Naive thymus-derived CD4-positive, alpha-beta T cell (primary cell): ENCODE measurements at regions of chr20 and their contacts with region 1.

Region 1: DNA sequence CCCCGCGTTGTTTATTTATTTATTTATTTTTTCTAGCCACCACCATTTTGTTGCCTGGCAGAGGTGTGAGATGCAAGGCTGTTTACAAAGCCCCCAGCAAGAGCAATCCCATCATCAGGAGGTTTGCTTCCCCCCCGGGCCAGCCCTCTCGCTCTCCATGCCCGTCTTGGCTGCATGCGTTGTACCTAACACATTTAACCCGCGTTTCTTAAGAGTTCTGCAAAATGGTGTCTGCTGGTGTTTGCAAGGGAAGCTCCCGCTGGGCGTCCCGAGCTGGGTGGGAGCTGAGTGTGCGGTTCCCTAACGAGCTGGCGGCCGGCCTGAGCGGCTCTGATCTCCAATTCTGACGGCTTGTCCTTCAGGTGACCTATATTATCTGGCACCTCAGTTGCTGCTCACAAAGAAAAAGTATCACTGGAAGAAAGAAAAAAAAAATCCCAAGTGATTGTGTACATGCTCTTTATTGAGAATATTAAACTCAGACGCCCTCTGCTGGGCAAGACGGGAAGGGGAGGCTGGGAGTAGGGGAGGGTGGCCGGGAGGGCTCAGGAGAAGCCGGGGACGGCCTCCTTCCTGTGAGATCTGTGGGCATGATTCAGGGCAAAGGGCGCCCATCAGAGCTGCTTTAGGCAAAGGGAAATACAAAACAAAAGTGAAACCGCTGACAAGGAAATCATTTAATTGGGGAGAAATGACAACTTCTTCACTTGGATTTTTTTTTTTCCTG is 154.8 kb downstream of the BCAS1 start:
- DNase-seq: peak; percentile 70 to 90 (median 88)
- ATAC-seq: peak; percentile 99
- H3K4me3 ChIP-seq: peak overlapping the region; percentile 79
- H3K4me3 Mint-ChIP-seq: peak overlapping the region; percentile 88 to 97 (median 94)
- H3K27ac ChIP-seq: peak overlapping the region; percentile 70
- H3K27ac Mint-ChIP-seq: peak overlapping the region; percentile 82 to 95 (median 90)
- H3K4me1 ChIP-seq: peaks cover 5 to 7% of the 10 kb centered on the region in 2 donors
- H3K4me1 Mint-ChIP-seq: peaks cover 15 to 37% (median 23%) of the 10 kb centered on the region in 7 donors
- H3K27me3 ChIP-seq: no peaks in the 10 kb centered on the region
- H3K27me3 Mint-ChIP-seq: no peaks in the 10 kb centered on the region

Region 2: DNA sequence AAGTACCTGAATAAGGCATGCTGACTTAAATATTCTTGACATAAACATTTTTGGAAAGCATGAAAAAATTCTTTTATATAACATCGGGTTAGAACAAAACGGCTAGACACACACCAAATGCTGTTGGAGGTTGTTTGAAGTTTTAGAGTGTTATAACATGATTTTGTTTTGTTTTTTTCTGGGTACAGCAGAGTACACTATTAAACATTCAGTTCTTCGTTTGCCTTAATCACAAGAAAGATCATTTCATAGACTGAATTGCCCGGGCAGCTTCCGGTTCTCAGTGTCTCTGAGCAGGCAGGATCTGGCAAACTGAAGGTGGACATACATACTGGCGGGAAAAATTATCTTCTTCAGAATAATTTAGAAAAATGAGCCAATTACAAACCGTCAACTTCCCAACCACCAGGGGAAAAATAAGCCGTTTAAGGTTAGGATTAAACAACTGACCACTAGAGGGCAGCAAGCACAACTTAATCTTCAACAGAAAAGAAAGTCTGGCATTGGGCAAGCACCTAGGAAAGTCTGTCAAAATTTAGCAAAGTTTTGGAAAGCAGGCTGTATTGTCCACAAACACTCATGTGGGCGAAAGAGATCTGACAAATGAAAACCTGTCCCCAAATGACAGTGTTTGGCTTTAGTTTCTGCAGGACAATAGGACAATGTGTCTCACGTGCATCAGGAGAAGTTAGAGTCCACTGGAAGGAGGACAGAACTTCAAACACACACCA is 337.0 kb before region 1 on chr20:
- CTCF ChIA-PET with region 1: interaction called, 54 read pairs
- POLR2A ChIA-PET with region 1: interaction called, 23 read pairs
- intact Hi-C with region 1: loop called (anchors 1 kb)
- DNase-seq: peak in 8 of 9 donors; percentile 44 to 85 (median 80)
- ATAC-seq: peak; percentile 85
- H3K4me3 ChIP-seq: peak overlapping the region; percentile 49
- H3K4me3 Mint-ChIP-seq: peak overlapping the region; percentile 79 to 98 (median 86)
- H3K27ac ChIP-seq: peak overlapping the region; percentile 70
- H3K27ac Mint-ChIP-seq: peak overlapping the region; percentile 83 to 98 (median 94)
- H3K4me1 ChIP-seq: peaks cover 53 to 60% of the 10 kb centered on the region in 2 donors
- H3K4me1 Mint-ChIP-seq: peaks cover 41 to 99% (median 91%) of the 10 kb centered on the region in 7 donors
- H3K27me3 ChIP-seq: no peaks in the 10 kb centered on the region
- H3K27me3 Mint-ChIP-seq: no peaks in the 10 kb centered on the region

Region 3: DNA sequence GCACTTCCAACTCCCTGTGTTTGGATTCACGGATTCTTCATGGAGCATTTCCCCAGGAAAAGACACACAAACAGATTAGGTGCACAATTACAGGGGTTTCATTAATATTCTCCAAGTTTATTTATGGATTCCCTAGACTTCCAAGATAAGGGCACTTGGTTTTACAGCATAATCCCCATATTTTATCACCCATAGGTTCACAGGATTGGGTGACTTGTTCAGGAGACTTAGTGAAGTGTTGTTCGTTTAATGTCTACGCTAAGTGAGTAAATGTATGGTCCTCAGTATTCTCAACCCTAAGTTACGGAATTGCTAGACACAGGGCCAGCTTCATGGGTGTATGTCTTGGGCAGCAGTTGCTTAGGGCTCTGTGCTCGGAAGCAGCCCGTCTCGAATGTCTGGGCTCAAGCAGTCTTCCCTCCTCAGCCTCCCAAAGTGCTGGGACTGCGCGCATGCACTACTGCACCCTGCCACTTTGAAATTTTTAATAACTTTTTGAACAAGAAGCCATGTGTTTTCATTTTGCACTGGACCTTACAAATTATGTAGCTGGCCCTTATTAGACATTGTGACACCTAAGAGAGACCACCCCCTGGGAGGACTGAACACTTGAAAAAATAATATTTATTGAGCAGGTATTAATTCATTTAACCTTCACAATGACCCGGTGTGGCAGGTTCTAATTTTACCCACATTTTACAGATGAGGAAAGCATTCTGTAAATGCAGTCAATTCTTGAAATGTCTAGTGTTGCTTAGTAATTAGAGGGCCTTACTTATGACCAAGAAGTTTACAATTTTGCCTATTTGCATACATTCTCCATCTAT is 230.4 kb before region 1 on chr20:
- CTCF ChIA-PET with region 1: interaction called, 5 read pairs
- POLR2A ChIA-PET with region 1: no interaction called
- intact Hi-C with region 1: loop called in 1 of 2 experiments (anchors 5 kb)
- DNase-seq: no peak
- ATAC-seq: no peak
- H3K4me3 ChIP-seq: no peak overlapping the region
- H3K4me3 Mint-ChIP-seq: peak overlapping the region in 2 of 10 donors; percentile 2 to 33
- H3K27ac ChIP-seq: no peak overlapping the region
- H3K27ac Mint-ChIP-seq: peak overlapping the region in 7 of 9 donors; percentile 19 to 83 (median 74)
- H3K4me1 ChIP-seq: peaks cover 0 to 8% of the 10 kb centered on the region in 2 donors
- H3K4me1 Mint-ChIP-seq: peaks cover 8 to 33% (median 20%) of the 10 kb centered on the region in 7 donors
- H3K27me3 ChIP-seq: no peaks in the 10 kb centered on the region
- H3K27me3 Mint-ChIP-seq: no peaks in the 10 kb centered on the region

Region 4: GRCh38 chr20:53828682-53829254 is 86.8 kb before region 1 on chr20:
- CTCF ChIA-PET with region 1: no interaction called
- POLR2A ChIA-PET with region 1: no interaction called
- intact Hi-C with region 1: loop called (anchors 5 kb)
- DNase-seq: no peak
- ATAC-seq: no peak
- H3K4me3 ChIP-seq: peak overlapping the region; percentile 52
- H3K4me3 Mint-ChIP-seq: peak overlapping the region; percentile 77 to 96 (median 88)
- H3K27ac ChIP-seq: peak overlapping the region; percentile 59
- H3K27ac Mint-ChIP-seq: peak overlapping the region; percentile 86 to 98 (median 94)
- H3K4me1 ChIP-seq: peaks cover 16 to 26% of the 10 kb centered on the region in 2 donors
- H3K4me1 Mint-ChIP-seq: peaks cover 24 to 62% (median 50%) of the 10 kb centered on the region in 7 donors
- H3K27me3 ChIP-seq: no peaks in the 10 kb centered on the region
- H3K27me3 Mint-ChIP-seq: no peaks in the 10 kb centered on the region

Region 5: DNA sequence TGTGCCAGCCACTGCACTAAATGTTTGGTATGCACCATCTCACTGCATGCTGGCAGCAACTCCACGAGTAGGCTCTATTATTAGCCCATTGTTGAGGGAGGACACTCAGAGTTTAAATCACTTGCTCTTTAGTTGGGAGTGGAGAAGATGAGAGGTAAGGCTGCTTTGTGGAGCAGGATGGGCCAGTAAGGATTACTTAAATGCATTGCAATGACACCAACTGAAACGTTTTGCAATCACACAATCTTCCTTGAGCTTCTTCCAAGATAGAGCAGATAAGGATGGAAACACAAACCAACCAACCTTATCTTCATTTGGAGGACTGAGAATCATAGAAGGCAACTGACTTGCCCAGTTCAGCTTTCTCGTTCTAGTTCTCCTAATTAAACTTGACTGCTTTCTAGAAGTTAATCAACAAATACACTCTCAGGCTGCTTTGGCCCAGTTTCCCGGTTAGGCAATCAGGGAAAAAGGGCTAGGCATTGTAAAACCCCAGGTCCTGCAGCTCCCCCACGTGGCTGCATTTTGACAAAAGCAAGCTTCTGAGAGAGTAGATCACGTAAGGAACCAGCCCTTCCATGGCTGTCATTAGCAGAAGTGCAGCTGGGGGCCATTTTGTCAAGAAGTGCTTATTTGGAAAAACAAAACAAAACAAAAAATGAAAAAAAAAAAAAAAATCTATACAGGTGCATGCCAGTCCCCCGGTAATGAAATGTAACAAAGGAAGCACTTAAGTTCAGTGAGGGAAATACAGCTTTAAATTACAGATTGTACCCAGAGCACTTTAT is 24.2 kb after region 1 on chr20:
- CTCF ChIA-PET with region 1: interaction called, 26 read pairs
- POLR2A ChIA-PET with region 1: interaction called, 3 read pairs
- intact Hi-C with region 1: loop called (anchors 1 to 2 kb)
- DNase-seq: peak; percentile 35 to 62 (median 48)
- ATAC-seq: peak; percentile 82
- H3K4me3 ChIP-seq: no peak overlapping the region
- H3K4me3 Mint-ChIP-seq: peak overlapping the region in 3 of 10 donors; percentile 24 to 44 (median 30)
- H3K27ac ChIP-seq: no peak overlapping the region
- H3K27ac Mint-ChIP-seq: peak overlapping the region in 6 of 9 donors; percentile 2 to 79 (median 22)
- H3K4me1 ChIP-seq: peaks cover 15 to 24% of the 10 kb centered on the region in 2 donors
- H3K4me1 Mint-ChIP-seq: peaks cover 26 to 62% (median 44%) of the 10 kb centered on the region in 7 donors
- H3K27me3 ChIP-seq: no peaks in the 10 kb centered on the region
- H3K27me3 Mint-ChIP-seq: no peaks in the 10 kb centered on the region